Aorta (tissue), 5 donors: ENCODE measurements at regions of chr19 and their contacts with region 1.

Region 1: GRCh38 chr19:18349524-18350128 is 9.2 kb downstream of the PGPEP1 start:
- DNase-seq: peak; percentile 73 to 86
- ATAC-seq: no peak
- H3K4me3 ChIP-seq: no peak overlapping the region
- H3K27ac ChIP-seq: no peak overlapping the region
- H3K4me1 ChIP-seq: no peaks in the 10 kb centered on the region
- H3K27me3 ChIP-seq: no peaks in the 10 kb centered on the region

Region 2: GRCh38 chr19:18274781-18275356 is 74.8 kb before region 1 on chr19:
- intact Hi-C with region 1: no loop called
- DNase-seq: peak; percentile 90 to 94
- ATAC-seq: peak; percentile 81
- H3K4me3 ChIP-seq: no peak overlapping the region
- H3K27ac ChIP-seq: peak overlapping the region in 1 of 2 donors; percentile 14
- H3K4me1 ChIP-seq: peaks cover 0 to 2% of the 10 kb centered on the region in 2 donors
- H3K27me3 ChIP-seq: no peaks in the 10 kb centered on the region

Region 3: DNA sequence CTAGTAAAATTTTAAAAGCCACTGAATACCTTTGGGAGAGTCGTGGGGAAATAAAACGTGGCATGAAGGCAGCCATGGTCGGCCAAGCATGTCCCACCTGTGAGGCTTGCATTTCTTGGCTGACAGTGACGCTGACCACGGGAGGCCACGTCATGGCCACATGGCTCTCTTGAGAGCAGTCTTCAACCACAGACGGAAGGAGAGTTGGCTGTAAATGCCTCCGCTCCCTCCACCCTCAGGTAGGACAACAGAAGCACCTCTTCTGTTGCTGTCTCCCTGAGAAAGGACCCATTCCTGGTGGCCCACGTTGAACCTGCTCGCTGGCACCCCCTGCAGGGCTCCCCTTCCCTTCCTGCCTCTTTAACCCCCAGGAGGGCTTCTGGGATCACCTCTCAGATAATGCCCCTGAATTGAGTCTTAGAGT is 58.4 kb after region 1 on chr19:
- intact Hi-C with region 1: loop called (anchors 2 kb)
- DNase-seq: no peak
- ATAC-seq: no peak
- H3K4me3 ChIP-seq: no peak overlapping the region
- H3K27ac ChIP-seq: no peak overlapping the region
- H3K4me1 ChIP-seq: no peaks in the 10 kb centered on the region
- H3K27me3 ChIP-seq: no peaks in the 10 kb centered on the region